HepG2 (cell line): ENCODE measurements at regions of chr16 and their contacts with region 1.

Region 1: GRCh38 chr16:51146256-51146924 is 4.7 kb downstream of the SALL1 start:
- DNase-seq: no peak
- ATAC-seq: no peak
- H3K4me3 ChIP-seq: no peak overlapping the region; a peak in 1 of 6 replicates
- H3K27ac ChIP-seq: peak overlapping the region; percentile 19
- H3K4me1 ChIP-seq: peaks cover 60% of the 10 kb centered on the region
- H3K27me3 ChIP-seq: no peaks in the 10 kb centered on the region; a peak in 1 of 5 replicates
- CTCF ChIP-seq: peak; percentile 44
- EP300 ChIP-seq: no peak
- POLR2A ChIP-seq: no peak
- RAD21 ChIP-seq: no peak

Region 2: DNA sequence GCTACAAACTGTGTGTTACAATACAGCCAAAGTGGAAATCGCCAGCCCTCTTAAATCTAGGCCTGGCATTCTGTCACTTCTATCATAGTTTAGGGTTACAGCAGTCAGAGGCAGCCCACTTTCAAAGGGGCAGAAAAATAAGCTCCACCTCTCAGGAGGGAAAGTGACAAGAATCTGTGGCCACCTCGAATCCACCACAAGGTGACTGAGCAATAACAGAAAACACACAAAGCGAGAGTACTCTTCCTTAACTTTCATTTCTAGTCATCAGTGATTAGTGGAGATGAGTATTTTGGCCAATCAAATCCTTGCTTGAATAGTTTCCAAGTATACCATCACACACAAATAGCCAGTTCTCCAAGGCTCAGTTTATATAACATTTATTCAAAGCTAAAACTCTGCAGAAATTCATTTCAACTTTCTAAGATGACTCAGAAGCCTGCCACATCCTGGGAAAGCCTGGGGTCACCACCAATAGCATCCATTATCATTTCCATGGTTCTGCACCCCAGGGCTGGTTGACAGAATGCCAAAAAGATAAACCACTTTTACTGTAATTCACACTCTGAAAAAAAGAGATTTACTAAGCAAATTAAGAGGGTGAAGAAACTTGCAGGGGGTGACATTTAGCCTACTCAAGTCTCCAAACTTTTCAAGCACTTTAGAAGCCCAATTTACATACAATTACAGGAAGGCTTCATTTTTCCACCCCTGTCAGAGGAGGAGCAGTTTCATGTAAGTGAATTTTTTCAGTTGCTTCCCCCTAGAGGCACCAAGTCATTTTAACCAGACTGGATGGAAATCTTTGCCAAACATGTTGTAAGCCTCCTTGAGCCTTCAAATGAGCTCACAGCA is 62.1 kb before region 1 on chr16:
- CTCF ChIA-PET with region 1: no interaction called
- POLR2A ChIA-PET with region 1: no interaction called
- in situ Hi-C with region 1: no loop called
- intact Hi-C with region 1: no loop called
- DNase-seq: no peak
- ATAC-seq: no peak
- H3K4me3 ChIP-seq: no peak overlapping the region
- H3K27ac ChIP-seq: no peak overlapping the region
- H3K4me1 ChIP-seq: peaks cover 9% of the 10 kb centered on the region; the same call in 1 of the 2 replicates
- H3K27me3 ChIP-seq: no peaks in the 10 kb centered on the region
- CTCF ChIP-seq: no peak
- EP300 ChIP-seq: no peak
- POLR2A ChIP-seq: no peak
- RAD21 ChIP-seq: no peak

Region 3: DNA sequence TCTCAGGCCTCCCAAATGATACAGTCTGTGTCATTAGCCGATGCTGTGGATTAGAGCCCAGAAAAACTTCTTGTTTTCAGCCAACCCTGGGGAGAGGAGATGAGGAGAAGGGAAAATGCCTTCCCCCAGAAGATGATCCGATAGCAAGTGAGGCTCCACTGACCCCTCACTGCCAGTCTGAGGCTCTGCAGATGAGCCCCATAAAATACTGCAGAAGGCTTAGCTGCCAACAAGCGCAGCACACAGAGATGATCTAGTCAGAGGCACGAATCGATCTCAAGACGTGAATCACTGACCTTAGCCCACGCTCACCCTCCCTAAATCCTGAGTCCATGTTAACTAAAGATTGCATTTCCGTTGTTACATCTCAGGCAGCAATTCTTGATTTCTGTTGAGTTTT is 26.8 kb before region 1 on chr16:
- CTCF ChIA-PET with region 1: no interaction called
- POLR2A ChIA-PET with region 1: interaction called, 12 read pairs
- in situ Hi-C with region 1: no loop called
- intact Hi-C with region 1: loop called (anchors 2 kb)
- DNase-seq: no peak
- ATAC-seq: peak; percentile 21
- H3K4me3 ChIP-seq: peak overlapping the region; percentile 49 to 57 (median 52)
- H3K27ac ChIP-seq: peak overlapping the region; percentile 94
- H3K4me1 ChIP-seq: peaks cover 87% of the 10 kb centered on the region
- H3K27me3 ChIP-seq: no peaks in the 10 kb centered on the region
- CTCF ChIP-seq: peak; percentile 44
- EP300 ChIP-seq: no peak
- POLR2A ChIP-seq: no peak
- RAD21 ChIP-seq: no peak

Region 4: DNA sequence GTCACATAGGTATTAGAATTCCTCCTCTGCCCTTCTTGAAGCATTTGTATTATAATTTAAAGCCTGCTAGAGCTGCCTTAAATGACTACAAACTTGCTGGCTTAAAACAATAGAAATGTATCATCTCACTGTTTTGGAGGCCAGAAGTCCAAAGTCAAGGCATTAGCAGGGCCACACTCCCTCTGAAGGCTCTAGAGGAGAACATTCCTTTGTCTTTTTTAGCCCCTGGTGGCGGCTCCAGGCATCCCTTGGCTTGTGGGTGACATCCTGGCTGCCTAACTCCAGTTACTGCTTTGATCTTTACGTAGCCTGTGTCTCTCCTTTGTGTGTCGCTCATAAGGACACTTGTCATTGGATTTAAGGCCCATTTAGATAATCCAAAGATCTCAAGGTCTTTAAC is 191.3 kb after region 1 on chr16:
- CTCF ChIA-PET with region 1: no interaction called
- POLR2A ChIA-PET with region 1: no interaction called
- in situ Hi-C with region 1: no loop called
- intact Hi-C with region 1: loop called (anchors 1 kb)
- DNase-seq: peak; percentile 57
- ATAC-seq: peak; percentile 99
- H3K4me3 ChIP-seq: no peak overlapping the region
- H3K27ac ChIP-seq: no peak overlapping the region
- H3K4me1 ChIP-seq: peaks cover 7% of the 10 kb centered on the region; the same call in 1 of the 2 replicates
- H3K27me3 ChIP-seq: no peaks in the 10 kb centered on the region
- CTCF ChIP-seq: peak; percentile 32; the same call in 1 of the 2 replicates
- EP300 ChIP-seq: no peak
- POLR2A ChIP-seq: no peak
- RAD21 ChIP-seq: peak; percentile 49; the same call in 1 of the 2 replicates